ENCODE measurements at regions of chr17 and their contacts with region 1.

Region 1: DNA sequence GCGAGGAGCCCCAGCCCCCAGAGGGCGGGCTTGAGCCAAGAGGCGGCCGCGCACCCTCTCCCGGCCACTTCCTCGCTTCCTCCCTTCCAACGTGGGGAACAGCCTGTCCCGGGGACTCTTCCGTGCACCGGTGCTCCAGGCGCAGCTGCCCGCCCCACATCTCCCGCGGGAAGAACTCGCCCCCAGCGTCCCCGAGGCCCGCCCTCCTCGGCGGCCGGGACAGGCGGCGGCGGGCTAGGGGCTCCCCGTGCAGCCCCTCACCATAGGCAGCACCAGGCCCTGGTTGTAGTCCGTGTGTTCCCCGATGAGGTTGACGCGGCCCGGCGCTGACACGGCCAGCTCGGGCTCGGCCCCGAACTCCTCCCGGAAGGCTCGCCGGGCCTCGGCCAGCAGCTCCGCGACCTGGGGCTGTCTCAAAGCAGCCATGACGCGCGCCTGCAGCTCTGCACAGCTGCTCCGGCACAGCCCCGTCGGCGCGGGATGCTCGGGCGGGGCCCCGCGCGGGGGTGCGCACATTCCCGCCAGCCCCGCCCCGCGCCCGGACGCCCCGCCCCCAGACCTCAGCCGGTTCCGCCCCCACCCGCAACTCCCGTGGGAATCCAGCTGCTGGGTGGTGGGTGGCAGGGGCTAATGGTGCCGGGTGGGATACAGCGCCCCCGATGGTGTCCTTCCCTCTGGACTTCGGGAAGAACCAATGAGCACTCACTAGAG is at the start of gene GALK1:
- DNase-seq: peak; percentile 62 to 73
- H3K4me3 ChIP-seq: peak within 1 kb of the TSS; percentile 87
- H3K27ac ChIP-seq: no peak within 1 kb of the TSS
- H3K4me1 ChIP-seq: peaks cover 9% of the 10 kb centered on the region; the same call in 1 of the 2 replicates
- H3K27me3 ChIP-seq: no peaks in the 10 kb centered on the region
- CTCF ChIP-seq: peak; percentile 27
- total RNA-seq, gene GALK1: 12.7 and 12.8 TPM in 2 replicates

Region 2: GRCh38 chr17:75672011-75672410 is 92.9 kb before region 1 on chr17:
- CTCF ChIA-PET with region 1: no interaction called
- POLR2A ChIA-PET with region 1: no interaction called
- intact Hi-C with region 1: no loop called
- DNase-seq: no peak
- H3K4me3 ChIP-seq: no peak overlapping the region
- H3K27ac ChIP-seq: no peak overlapping the region
- H3K4me1 ChIP-seq: peaks cover 16% of the 10 kb centered on the region
- H3K27me3 ChIP-seq: no peaks in the 10 kb centered on the region
- CTCF ChIP-seq: no peak

Region 3: DNA sequence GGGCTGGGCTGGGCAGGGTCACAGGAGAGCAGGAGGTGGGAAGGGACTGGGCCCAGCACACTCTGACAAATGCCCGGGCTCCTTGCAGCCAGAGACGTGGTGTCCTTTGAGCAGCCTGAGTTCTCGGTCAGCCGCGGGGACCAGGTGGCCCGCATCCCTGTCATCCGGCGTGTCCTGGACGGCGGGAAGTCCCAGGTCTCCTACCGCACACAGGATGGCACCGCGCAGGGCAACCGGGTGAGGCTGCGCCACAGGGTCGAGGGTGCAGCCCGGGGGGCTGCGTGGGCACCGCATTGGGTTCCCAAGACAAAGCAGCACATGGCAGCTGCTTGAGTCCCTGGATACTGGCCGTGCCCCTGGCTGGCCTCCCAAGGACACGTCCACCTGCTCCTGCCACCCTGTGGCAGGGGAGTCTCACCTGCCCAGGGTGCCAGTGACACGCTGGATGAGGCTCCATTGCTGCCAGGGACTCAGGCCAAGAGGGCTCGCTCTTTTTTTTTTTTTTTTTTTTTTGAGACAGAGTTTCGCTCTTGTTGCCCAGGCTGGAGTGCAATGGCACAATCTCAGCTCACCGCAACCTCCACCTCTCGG is 21.1 kb before region 1 on chr17:
- CTCF ChIA-PET with region 1: interaction called, 17 read pairs
- POLR2A ChIA-PET with region 1: no interaction called
- intact Hi-C with region 1: no loop called
- DNase-seq: no peak
- H3K4me3 ChIP-seq: no peak overlapping the region
- H3K27ac ChIP-seq: no peak overlapping the region
- H3K4me1 ChIP-seq: 0 out of 2 replicates have a peak, but pooled peaks cover 3% of the 10 kb centered on the region
- H3K27me3 ChIP-seq: no peaks in the 10 kb centered on the region
- CTCF ChIP-seq: no peak

Region 4: DNA sequence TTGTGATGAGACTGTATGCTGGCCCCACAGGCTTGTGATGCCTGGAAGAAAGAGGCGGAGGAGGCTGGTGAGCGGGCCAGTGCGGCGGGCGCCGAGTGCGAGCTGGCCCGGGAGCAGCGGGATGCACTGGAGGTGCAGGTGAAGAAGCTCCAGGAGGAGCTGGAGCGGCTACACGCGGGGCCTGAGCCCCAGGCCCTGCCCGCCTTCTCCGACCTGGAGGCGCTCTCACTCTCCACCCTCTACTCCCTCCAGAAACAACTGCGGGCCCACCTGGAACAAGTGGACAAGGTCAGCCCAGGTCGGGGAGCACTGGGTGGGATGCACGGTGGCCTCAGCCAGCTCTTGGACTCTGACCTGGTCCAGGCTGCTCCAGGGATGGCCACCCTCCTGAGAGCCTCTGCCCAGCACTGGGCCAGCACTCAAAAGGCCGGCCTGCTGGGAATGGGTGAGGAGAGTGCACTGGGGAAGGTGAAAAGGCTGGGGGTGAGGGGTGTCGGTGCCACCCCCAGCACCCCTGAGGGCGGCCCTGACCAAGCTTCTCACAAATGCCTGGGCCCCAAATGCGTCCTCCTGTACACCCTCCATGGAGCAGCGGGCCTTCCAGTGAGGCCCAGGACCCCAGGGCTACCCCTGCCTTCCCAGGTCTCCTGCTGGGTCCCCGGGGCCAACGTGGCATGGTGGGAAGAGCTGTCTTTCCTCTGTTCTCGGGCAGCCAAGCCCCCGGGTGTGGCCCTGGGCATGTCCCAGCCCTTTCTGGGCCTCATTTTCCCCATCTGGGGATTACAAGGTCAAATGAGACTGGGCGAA is 58.6 kb after region 1 on chr17:
- CTCF ChIA-PET with region 1: no interaction called
- POLR2A ChIA-PET with region 1: no interaction called
- intact Hi-C with region 1: no loop called
- DNase-seq: no peak
- H3K4me3 ChIP-seq: no peak overlapping the region
- H3K27ac ChIP-seq: no peak overlapping the region
- H3K4me1 ChIP-seq: no peaks in the 10 kb centered on the region
- H3K27me3 ChIP-seq: no peaks in the 10 kb centered on the region
- CTCF ChIP-seq: no peak

Region 5: DNA sequence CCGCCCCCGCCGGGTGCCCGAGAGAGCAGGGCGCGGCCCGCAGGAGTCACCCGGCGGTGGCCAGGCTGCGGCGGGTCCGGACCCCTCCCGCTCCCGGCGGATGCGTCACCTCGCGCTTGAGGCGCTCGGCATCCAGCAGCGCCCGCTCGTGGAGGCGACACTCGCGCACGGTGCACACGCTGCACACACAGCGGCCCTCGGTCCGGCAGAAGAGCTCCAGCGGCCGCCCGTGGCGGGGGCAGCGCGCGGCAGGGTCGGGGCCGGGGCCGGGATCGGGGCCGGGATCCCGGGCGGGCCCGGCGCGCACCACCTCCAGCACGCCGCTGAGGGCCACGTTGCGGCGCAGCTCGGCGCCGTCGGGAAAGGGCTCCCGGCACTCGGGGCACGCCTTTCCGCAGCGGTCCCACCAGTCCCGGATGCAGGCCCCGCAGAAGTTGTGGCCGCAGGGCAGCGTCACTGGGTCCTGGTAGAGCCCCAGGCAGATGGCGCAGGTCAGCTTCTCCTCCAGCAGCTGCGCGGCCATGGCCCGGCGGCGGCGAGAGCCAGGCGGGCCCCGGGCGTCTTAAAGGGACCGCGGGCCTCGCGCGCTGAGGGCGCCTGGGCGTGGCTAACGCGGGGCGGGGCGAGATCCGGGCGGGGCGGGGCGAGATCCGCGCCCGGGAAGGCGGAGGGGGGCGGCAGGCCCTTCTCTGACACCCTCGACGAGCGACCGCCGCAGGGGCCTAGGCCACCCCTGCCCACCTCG is 131.7 kb after region 1 on chr17 and contains the start of gene TRIM65:
- CTCF ChIA-PET with region 1: interaction called, 11 read pairs
- POLR2A ChIA-PET with region 1: no interaction called
- intact Hi-C with region 1: loop called (anchors 2 kb)
- DNase-seq: peak; percentile 59 to 77
- H3K4me3 ChIP-seq: peak within 1 kb of the TSS; percentile 77
- H3K27ac ChIP-seq: peak within 1 kb of the TSS; percentile 33
- H3K4me1 ChIP-seq: 0 out of 2 replicates have a peak, but pooled peaks cover 4% of the 10 kb centered on the region
- H3K27me3 ChIP-seq: no peaks in the 10 kb centered on the region
- CTCF ChIP-seq: no peak
- total RNA-seq, gene TRIM65: 21.1 and 27.1 TPM in 2 replicates